Dendritic cell treated with granulocyte-macrophage colony-stimulating factor and Interleukin-4, amounts not matched to agents 40 ng/mL and 50 ng/mL, for 4 days (primary cell): ENCODE measurements at regions of chr12 and their contacts with region 1.

Region 1: DNA sequence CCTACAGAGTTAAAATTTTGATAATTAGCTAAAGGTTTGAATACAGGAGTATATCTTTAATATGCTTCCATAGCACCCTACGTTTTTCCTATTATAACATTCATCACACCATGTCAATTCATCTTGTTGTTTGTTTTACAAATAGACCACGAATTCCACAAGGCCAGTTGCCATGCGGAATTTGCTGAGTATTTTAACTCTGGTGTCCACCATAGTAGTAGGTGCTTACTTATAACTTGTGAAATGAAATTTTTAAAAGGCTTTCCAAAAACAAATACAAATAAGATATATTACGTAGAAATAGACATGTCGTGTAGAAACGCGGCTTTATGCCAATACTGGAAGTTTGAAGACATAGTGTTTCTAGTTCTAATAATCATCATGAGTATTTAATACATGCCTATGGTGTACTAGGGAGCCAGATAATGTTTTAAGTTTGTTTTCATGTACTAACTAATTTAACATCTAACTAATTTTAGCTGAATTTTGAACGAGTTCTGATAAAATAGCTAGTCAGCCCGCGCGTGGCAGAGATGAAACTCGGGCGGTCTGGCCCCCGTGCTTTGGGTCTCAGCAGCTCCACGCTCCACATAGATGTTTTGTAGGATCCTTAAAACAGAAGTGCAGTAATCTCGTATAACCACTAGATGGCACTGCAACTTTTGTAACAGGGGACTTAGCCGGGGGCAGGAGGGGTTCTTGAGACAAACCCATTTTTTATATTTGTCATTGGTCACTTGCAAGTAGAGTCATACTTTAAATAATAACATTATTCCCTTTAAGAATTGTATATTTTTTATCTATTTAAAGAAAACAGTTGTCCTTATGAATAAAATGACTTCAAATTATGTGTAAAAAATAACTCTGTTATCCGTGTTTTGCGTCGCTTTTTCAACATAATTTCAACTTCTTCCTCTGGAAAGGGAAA is 10.2 kb downstream of the CD69 start:
- H3K4me3 Mint-ChIP-seq: no peak overlapping the region
- H3K27ac Mint-ChIP-seq: no peak overlapping the region
- H3K4me1 Mint-ChIP-seq: peaks cover 16% of the 10 kb centered on the region
- H3K27me3 Mint-ChIP-seq: no peaks in the 10 kb centered on the region

Region 2: GRCh38 chr12:9797722-9798619 is 47.4 kb after region 1 on chr12:
- intact Hi-C with region 1: loop called (anchors 2 kb)
- H3K4me3 Mint-ChIP-seq: no peak overlapping the region
- H3K27ac Mint-ChIP-seq: peak overlapping the region; percentile 34
- H3K4me1 Mint-ChIP-seq: peaks cover 28% of the 10 kb centered on the region
- H3K27me3 Mint-ChIP-seq: no peaks in the 10 kb centered on the region

Region 3: GRCh38 chr12:9925708-9926393 is 175.3 kb after region 1 on chr12:
- intact Hi-C with region 1: loop called (anchors 1 kb)
- H3K4me3 Mint-ChIP-seq: peak overlapping the region; percentile 63
- H3K27ac Mint-ChIP-seq: peak overlapping the region; percentile 60
- H3K4me1 Mint-ChIP-seq: peaks cover 18% of the 10 kb centered on the region
- H3K27me3 Mint-ChIP-seq: no peaks in the 10 kb centered on the region

Region 4: DNA sequence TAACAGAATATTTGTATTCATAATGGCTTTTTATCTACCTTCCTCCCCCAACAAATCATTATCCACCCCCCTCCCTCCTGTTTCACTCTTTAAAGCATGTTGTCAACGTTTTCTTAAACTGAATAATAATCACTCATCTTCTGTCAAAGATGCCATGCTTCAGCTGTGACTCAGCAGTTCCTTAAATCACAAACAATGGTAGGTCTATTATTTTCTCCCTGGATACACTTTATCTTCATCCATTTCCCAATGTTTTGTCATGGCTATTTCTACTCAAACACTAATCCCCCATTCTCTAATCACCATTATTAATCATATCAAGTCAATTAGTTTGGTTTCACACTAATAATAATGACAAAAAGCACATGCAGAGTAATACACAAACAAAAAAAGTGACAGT is 266.3 kb after region 1 on chr12:
- intact Hi-C with region 1: loop called (anchors 10 kb)
- H3K4me3 Mint-ChIP-seq: no peak overlapping the region
- H3K27ac Mint-ChIP-seq: peak overlapping the region; percentile 46
- H3K4me1 Mint-ChIP-seq: peaks cover 15% of the 10 kb centered on the region
- H3K27me3 Mint-ChIP-seq: no peaks in the 10 kb centered on the region